ENCODE measurements at regions of chr16 and their contacts with region 1.

Region 1: DNA sequence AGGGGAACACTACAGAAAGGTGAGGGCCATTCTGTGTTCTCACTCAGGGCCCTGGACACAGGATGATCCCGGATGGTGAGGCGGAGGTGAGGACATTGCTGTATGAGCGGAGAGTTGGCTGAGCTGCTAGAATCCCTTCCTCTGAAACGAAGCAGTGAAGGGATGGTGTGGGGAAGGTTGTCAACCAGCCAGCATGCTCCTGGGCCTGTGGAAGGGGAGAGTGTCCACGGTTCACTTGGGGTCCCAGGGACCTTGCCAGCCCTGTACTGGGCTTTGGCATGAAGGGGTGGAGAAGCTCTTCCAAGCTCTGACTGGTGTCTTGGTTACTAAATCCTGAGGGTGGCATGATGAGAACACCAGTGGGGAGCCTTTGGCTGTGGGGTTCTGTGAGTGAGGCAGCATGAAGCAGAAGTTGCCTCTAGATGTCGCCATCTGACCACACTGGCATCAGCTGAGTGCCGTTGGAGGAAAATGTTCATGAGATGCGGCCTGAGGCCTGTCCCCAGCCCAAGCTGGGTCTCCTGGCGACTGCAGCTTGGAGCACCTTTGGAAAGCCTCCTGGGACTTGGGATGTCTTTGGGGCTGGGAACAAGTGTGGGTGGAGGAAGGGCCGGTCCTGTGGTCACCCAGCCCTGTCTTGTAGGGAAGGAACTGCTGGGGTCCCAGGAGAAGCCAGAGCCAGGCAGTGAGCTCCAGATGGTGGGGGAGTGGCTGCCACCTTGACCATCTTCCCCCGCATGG is 14.8 kb downstream of the PDP2 start:
- DNase-seq: peak; percentile 64
- H3K4me3 ChIP-seq: no peak overlapping the region
- H3K27ac ChIP-seq: no peak overlapping the region
- H3K4me1 ChIP-seq: peaks cover 5% of the 10 kb centered on the region
- H3K27me3 ChIP-seq: no peaks in the 10 kb centered on the region
- CTCF ChIP-seq: peak; percentile 74 to 89
- POLR2A ChIP-seq: no peak

Region 2: GRCh38 chr16:66850115-66850815 is 44.9 kb before region 1 on chr16:
- CTCF ChIA-PET with region 1: no interaction called
- POLR2A ChIA-PET with region 1: no interaction called
- dilution Hi-C with region 1: no loop called
- intact Hi-C with region 1: no loop called
- DNase-seq: no peak
- H3K4me3 ChIP-seq: no peak overlapping the region
- H3K27ac ChIP-seq: no peak overlapping the region
- H3K4me1 ChIP-seq: no peaks in the 10 kb centered on the region
- H3K27me3 ChIP-seq: peaks cover 22 to 26% of the 10 kb centered on the region in 2 experiments
- CTCF ChIP-seq: no peak
- POLR2A ChIP-seq: no peak

Region 3: GRCh38 chr16:66911112-66911511 is 16.0 kb after region 1 on chr16:
- CTCF ChIA-PET with region 1: interaction called, 19 read pairs
- POLR2A ChIA-PET with region 1: no interaction called
- dilution Hi-C with region 1: no loop called
- intact Hi-C with region 1: no loop called
- DNase-seq: no peak
- H3K4me3 ChIP-seq: no peak overlapping the region
- H3K27ac ChIP-seq: no peak overlapping the region
- H3K4me1 ChIP-seq: no peaks in the 10 kb centered on the region
- H3K27me3 ChIP-seq: peaks cover 0 to 2% of the 10 kb centered on the region in 2 experiments
- CTCF ChIP-seq: no peak
- POLR2A ChIP-seq: no peak

Region 4: GRCh38 chr16:66924527-66925321 is 29.6 kb after region 1 on chr16:
- CTCF ChIA-PET with region 1: interaction called, 72 read pairs
- POLR2A ChIA-PET with region 1: no interaction called
- dilution Hi-C with region 1: no loop called
- intact Hi-C with region 1: loop called (anchors 1 kb)
- DNase-seq: no peak
- H3K4me3 ChIP-seq: peak overlapping the region in 2 of 3 experiments; percentile 14 to 20
- H3K27ac ChIP-seq: no peak overlapping the region
- H3K4me1 ChIP-seq: peaks cover 3% of the 10 kb centered on the region
- H3K27me3 ChIP-seq: peaks cover 30 to 41% of the 10 kb centered on the region in 2 experiments
- CTCF ChIP-seq: peak; percentile 36 to 44
- POLR2A ChIP-seq: no peak

Region 5: DNA sequence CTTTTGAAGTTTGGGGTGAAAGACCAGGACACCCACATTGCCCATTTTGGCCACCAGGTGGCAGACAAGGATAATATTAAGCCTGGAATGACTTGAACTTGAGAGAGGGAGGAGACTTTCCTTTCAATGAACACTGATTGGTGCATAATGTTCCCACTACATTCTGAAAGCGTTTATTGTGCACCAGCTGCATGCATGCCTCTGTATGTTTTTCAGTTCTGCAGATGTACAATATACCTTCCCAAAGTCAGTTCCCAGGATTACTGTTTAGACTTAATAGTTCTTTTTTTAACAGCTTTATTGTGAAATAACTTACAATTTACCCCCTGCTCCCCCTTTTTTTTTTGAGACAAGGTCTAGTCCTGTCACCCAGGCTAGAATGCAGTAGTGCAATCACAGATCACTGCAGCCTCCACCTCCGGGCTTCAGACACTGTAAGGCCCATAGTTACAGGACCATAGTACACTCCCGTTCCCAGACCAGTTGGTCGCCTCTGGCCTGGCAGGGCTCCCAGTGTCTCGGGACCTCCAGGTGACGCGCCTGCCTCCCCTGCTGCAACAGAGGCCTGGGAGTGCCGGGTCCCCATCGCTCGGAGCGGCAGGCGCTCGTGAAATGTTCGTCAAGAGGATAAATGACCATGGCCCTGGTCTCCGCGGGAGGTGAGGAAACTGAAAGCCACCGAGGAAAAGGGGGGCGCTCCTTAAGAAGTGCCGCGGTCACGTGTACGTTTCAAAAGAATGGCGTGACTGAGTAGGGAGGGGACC is 52.4 kb after region 1 on chr16:
- CTCF ChIA-PET with region 1: interaction called, 18 read pairs
- POLR2A ChIA-PET with region 1: no interaction called
- dilution Hi-C with region 1: no loop called
- intact Hi-C with region 1: loop called (anchors 1 kb)
- DNase-seq: peak; percentile 90
- H3K4me3 ChIP-seq: peak overlapping the region; percentile 18 to 45 (median 33)
- H3K27ac ChIP-seq: no peak overlapping the region
- H3K4me1 ChIP-seq: peaks cover 12% of the 10 kb centered on the region
- H3K27me3 ChIP-seq: peaks cover 4 to 10% of the 10 kb centered on the region in 2 experiments
- CTCF ChIP-seq: peak; percentile 80 to 95
- POLR2A ChIP-seq: no peak

Region 6: GRCh38 chr16:68848786-68849185 is 1953.7 kb after region 1 on chr16:
- CTCF ChIA-PET with region 1: no interaction called
- POLR2A ChIA-PET with region 1: no interaction called
- dilution Hi-C with region 1: no loop called
- intact Hi-C with region 1: loop called (anchors 10 kb)
- DNase-seq: no peak
- H3K4me3 ChIP-seq: no peak overlapping the region
- H3K27ac ChIP-seq: no peak overlapping the region
- H3K4me1 ChIP-seq: peaks cover 7% of the 10 kb centered on the region
- H3K27me3 ChIP-seq: no peaks in the 10 kb centered on the region
- CTCF ChIP-seq: no peak
- POLR2A ChIP-seq: no peak

Measured in endothelial cell of umbilical vein (primary cell).